GM12878 (cell line): ENCODE measurements at regions of chr16 and their contacts with region 1.

Region 1: DNA sequence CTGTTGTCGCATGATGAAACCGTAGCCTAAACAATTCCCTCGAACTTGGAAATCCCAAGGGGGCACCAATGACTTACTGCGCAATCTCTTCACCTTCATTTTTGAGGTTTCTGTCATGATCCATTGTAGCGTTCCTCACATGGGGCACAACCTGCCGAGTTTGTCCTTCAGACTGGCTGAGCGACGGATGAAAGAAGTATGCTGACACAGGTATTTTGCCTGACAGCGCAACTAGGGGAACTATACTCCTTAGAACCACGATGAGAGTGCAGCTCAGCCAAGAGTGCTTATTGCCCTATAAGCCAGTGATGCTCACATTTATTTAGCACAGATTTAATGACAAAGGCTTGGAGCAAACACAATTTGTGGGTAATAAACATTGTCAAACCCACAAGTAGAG is 106.3 kb upstream of the ZNF267 start:
- DNase-seq: no peak
- ATAC-seq: no peak
- H3K4me3 ChIP-seq: no peak overlapping the region
- H3K27ac ChIP-seq: no peak overlapping the region
- H3K4me1 ChIP-seq: no peaks in the 10 kb centered on the region
- H3K27me3 ChIP-seq: no peaks in the 10 kb centered on the region
- CTCF ChIP-seq: no peak
- EP300 ChIP-seq: no peak
- POLR2A ChIP-seq: no peak
- RAD21 ChIP-seq: no peak

Region 2: DNA sequence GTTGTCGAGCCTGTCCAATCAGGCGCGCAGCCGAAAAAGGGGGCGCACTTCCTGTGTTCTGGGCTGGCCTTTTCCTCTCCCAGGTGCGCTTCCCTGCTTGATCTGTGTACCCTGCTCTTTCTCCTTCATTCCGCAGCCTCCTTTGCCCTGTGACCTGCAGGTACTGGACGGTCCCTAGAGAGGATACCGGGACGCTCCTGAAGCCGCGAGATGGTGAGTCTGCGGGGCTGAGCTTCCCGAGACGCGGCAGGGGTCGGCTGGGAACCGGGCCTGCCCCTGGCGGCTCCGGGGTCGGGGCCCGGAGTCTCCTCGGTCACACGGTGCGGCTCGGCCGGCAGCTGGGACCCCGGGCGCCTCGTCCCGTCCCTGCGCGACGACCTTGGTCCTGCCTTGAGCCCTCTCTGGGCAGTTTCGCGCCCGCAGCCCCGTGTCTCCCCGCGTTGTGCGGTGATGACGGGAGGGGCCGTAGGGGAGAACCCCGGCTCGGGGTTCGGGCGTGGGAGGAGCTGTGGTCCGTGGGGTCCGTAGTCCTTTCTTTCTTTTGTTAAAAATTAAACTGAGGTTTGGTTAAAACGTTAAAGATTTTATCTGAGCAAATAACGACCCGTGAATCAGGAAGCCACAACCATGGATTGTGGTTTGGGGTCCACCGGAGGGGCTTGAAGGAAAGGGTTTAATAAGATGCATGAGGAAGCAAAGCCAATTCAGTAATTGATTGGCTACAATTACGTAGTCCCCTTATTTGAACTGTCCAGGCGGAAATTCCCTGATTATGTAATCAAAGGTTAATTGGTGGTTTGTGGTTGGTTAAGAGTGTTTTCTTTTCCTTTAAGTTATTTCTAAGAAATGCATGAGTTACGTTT is 66.5 kb before region 1 on chr16:
- CTCF ChIA-PET with region 1: no interaction called
- POLR2A ChIA-PET with region 1: no interaction called
- RAD21 ChIA-PET with region 1: no interaction called
- SMC1A ChIA-PET with region 1: no interaction called
- in situ Hi-C with region 1: no loop called
- intact Hi-C with region 1: no loop called
- DNase-seq: peak; percentile 67
- ATAC-seq: peak; percentile 95
- H3K4me3 ChIP-seq: peak overlapping the region; percentile 91
- H3K27ac ChIP-seq: peak overlapping the region; percentile 88
- H3K4me1 ChIP-seq: peaks cover 5% of the 10 kb centered on the region; the same call in 1 of the 2 replicates
- H3K27me3 ChIP-seq: no peaks in the 10 kb centered on the region
- CTCF ChIP-seq: peak in 2 of 3 experiments; percentile 6 to 7; a peak in 1 of 6 replicates
- EP300 ChIP-seq: peak; percentile 52 to 81; a peak in 3 of 4 replicates
- POLR2A ChIP-seq: peak; percentile 80
- RAD21 ChIP-seq: no peak

Region 3: DNA sequence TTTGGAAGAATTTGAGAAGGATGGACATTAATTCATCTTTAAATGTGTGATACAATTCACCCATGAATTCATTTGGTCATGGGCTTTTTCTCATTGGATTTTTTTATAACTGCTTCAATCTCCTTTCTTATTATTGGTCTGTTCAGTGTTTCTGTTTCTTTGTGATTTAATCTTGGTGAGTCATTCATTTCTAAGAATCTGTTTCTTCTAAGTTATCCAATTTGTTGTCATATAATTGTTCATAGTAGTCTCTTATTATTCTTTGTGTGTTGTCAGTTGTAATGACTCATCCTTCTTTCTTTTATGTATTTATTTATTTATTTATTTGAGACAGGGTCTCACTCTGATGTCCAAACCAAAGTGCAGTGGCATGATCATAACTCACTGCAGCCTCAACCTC is 39.7 kb before region 1 on chr16:
- CTCF ChIA-PET with region 1: no interaction called
- POLR2A ChIA-PET with region 1: no interaction called
- RAD21 ChIA-PET with region 1: no interaction called
- SMC1A ChIA-PET with region 1: no interaction called
- in situ Hi-C with region 1: no loop called
- intact Hi-C with region 1: no loop called
- DNase-seq: no peak
- ATAC-seq: no peak
- H3K4me3 ChIP-seq: no peak overlapping the region
- H3K27ac ChIP-seq: no peak overlapping the region
- H3K4me1 ChIP-seq: no peaks in the 10 kb centered on the region
- H3K27me3 ChIP-seq: no peaks in the 10 kb centered on the region
- CTCF ChIP-seq: no peak
- EP300 ChIP-seq: no peak
- POLR2A ChIP-seq: no peak
- RAD21 ChIP-seq: no peak

Region 4: DNA sequence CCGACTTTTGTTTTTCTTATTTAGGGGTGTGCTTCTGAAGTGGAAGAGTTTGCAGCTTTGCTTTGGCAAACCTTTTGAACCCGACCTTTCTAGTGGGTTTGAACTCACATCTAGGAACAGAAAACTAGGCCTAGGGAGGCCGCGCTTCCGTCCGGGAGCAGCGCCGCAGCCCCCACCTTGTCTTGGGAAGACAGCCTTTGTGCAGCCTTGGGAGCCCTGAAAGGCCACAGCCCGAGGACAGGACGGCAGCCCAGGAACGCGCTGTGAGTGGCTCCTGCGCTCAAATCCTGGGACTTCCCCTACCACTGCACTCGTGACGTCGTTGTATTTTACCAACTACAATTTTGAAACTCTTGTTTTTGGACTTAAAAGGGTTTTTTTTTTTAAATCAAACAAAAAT is 52.7 kb after region 1 on chr16:
- CTCF ChIA-PET with region 1: no interaction called
- POLR2A ChIA-PET with region 1: no interaction called
- RAD21 ChIA-PET with region 1: no interaction called
- SMC1A ChIA-PET with region 1: no interaction called
- in situ Hi-C with region 1: loop called (anchors 5 kb)
- intact Hi-C with region 1: no loop called
- DNase-seq: no peak
- ATAC-seq: no peak
- H3K4me3 ChIP-seq: no peak overlapping the region
- H3K27ac ChIP-seq: no peak overlapping the region
- H3K4me1 ChIP-seq: no peaks in the 10 kb centered on the region
- H3K27me3 ChIP-seq: no peaks in the 10 kb centered on the region
- CTCF ChIP-seq: no peak
- EP300 ChIP-seq: no peak
- POLR2A ChIP-seq: no peak
- RAD21 ChIP-seq: no peak